ENCODE measurements at regions of chr11 and their contacts with region 1.

Region 1: GRCh38 chr11:66579017-66579606 is 10.7 kb upstream of the CTSF start:
- DNase-seq: peak; percentile 83
- CTCF ChIP-seq: peak; percentile 74

Region 2: DNA sequence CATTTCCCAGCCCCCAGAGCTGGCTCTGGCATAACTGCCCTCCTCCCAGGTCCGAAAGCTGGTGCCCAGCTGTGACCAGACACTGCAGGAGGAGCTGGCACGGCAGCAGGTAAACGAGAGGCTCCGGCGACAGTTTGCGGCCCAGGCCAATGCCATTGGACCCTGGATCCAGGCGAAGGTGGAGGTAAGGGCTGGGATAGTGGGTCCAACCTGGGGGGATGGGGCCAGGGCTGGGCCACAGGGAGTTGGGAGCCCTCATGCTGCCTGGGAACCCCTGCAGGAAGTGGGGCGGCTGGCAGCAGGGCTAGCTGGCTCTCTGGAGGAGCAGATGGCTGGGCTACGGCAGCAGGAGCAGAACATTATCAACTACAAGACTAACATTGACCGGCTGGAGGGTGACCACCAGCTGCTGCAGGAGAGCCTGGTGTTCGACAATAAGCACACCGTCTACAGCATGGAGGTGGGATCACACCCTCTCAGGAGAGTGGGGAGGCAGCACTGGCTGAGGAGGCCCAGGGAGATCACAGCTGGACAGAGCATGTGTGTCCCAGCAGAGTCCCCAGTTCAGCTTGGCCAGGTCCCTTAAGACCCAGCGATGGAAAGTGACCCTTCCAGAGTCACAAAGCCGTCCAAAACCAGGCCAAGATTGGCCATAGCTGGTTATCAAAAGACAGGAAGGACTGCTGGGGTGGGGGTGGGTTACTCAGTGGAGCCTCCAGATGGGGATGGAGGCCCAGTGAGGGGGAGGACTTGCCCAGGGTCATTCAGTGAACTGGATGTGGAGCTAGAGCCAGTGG is 17.7 kb before region 1 on chr11:
- CTCF ChIA-PET with region 1: interaction called, 11 read pairs
- POLR2A ChIA-PET with region 1: no interaction called
- DNase-seq: no peak
- CTCF ChIP-seq: no peak

Region 3: GRCh38 chr11:66568124-66568916 is 10.8 kb before region 1 on chr11 and contains the start of gene CTSF:
- CTCF ChIA-PET with region 1: interaction called, 18 read pairs
- POLR2A ChIA-PET with region 1: no interaction called
- DNase-seq: peak; percentile 92
- CTCF ChIP-seq: no peak

Region 4: DNA sequence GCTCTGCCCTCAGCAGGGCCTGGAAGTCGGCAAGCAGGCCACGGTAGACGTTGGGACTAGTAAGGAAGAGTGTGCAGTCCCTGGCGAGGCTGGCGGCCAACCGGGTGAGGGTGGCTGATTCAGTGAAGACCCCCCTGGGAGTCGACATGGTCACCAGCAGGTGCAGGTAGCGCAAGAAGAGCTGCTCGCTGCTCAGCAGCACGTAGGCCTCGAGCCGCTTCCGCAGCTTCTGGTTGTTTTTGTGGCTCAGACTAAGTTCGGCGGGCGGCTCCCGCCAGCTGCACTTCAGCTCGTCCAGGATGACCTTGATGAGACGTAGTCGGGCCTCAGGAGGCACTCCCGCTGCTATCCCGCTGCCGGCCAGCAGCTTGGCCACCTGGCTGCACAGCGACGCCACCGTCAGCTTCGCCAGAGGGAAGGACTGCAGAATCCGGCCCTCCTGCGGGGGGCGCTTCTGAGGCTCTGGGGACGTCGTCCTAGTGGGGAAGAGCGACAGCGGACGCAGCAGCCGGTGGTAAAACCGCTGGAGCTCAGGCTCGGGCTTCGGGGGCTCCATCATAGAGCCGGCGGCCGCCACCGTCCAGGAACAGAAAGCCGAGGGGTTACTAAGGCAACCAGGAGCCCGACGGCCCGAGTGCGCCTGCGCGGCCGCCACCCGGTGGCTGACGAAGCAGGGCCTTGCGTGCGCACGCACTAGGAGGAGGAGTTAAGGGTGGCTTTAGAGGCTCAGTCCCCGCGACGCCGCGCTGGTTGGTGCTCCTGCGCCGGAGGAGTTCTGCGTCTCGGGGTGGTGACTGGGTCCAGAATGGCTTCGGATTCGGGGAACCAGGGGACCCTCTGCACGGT is 13.6 kb after region 1 on chr11 and contains the starts of genes CCDC87 and CCS:
- CTCF ChIA-PET with region 1: interaction called, 13 read pairs
- POLR2A ChIA-PET with region 1: no interaction called
- DNase-seq: peak; percentile 100
- CTCF ChIP-seq: peak; percentile 43

Measured in GM10248 (cell line).